CD14-positive monocyte (primary cell): ENCODE measurements at regions of chr22 and their contacts with region 1.

Region 1: DNA sequence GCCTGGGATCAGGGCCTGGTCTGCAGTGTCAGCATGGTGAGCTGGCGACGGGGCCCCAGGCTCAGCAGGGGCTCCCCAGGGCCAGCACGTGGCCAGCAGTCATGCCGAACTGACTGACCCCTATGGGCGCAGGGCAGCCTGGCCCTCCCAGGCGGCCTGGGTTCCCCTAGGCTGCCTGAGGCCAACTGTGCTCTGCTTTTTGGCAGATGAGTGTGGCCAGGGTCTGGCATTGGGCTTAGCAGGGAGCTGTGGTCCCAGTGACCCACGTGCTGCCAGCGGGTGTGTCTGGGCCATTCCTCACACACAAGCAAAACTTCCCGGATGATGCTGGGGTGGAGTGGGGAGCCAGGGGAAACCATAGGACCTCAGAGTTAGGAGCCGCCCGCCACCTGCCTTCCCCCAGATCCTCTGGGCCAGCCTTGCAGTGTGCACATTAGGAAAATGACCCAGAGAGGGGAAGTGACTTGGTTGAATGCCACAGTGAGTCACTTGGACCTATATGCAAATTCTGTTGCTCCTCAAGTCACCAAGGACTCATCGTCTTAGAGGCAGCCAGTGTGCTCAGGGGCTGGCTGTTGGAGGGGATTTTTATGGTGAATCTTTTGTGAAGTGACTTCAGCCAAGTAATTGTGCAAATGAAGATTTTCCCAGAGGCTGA is 6.5 kb downstream of the ADORA2A start:
- DNase-seq: peak; percentile 94 to 100 (median 98)
- H3K4me3 ChIP-seq: peak overlapping the region in 1 of 3 experiments; percentile 23
- H3K4me3 Mint-ChIP-seq: peak overlapping the region; percentile 63 to 81
- H3K27ac ChIP-seq: peak overlapping the region; percentile 98 to 99
- H3K27ac Mint-ChIP-seq: peak overlapping the region; percentile 98 to 100 (median 100)
- H3K4me1 ChIP-seq: peaks cover 72 to 100% of the 10 kb centered on the region in 2 donors
- H3K4me1 Mint-ChIP-seq: peaks cover 88% of the 10 kb centered on the region
- H3K27me3 ChIP-seq: no peaks in the 10 kb centered on the region
- H3K27me3 Mint-ChIP-seq: peaks cover 0 to 2% (median 0%) of the 10 kb centered on the region in 3 donors
- CTCF ChIP-seq: no peak

Region 2: GRCh38 chr22:23888615-23889401 is 545.1 kb before region 1 on chr22:
- intact Hi-C with region 1: no loop called
- DNase-seq: no peak
- H3K4me3 ChIP-seq: no peak overlapping the region
- H3K4me3 Mint-ChIP-seq: no peak overlapping the region
- H3K27ac ChIP-seq: no peak overlapping the region
- H3K27ac Mint-ChIP-seq: no peak overlapping the region
- H3K4me1 ChIP-seq: peaks cover 6 to 7% of the 10 kb centered on the region in 2 donors
- H3K4me1 Mint-ChIP-seq: peaks cover 7% of the 10 kb centered on the region
- H3K27me3 ChIP-seq: no peaks in the 10 kb centered on the region
- H3K27me3 Mint-ChIP-seq: peaks cover 3 to 8% (median 4%) of the 10 kb centered on the region in 3 donors
- CTCF ChIP-seq: no peak

Region 3: GRCh38 chr22:24402460-24403192 is 31.3 kb before region 1 on chr22:
- intact Hi-C with region 1: loop called in 1 of 2 experiments (anchors 2 kb)
- DNase-seq: peak; percentile 94 to 98 (median 97)
- H3K4me3 ChIP-seq: peak overlapping the region in 1 of 3 experiments; percentile 35
- H3K4me3 Mint-ChIP-seq: peak overlapping the region; percentile 57 to 67
- H3K27ac ChIP-seq: peak overlapping the region; percentile 38 to 82
- H3K27ac Mint-ChIP-seq: peak overlapping the region; percentile 89 to 98 (median 92)
- H3K4me1 ChIP-seq: peaks cover 34% of the 10 kb centered on the region in 2 donors
- H3K4me1 Mint-ChIP-seq: peaks cover 49% of the 10 kb centered on the region
- H3K27me3 ChIP-seq: no peaks in the 10 kb centered on the region
- H3K27me3 Mint-ChIP-seq: peaks cover 2% of the 10 kb centered on the region in 3 donors
- CTCF ChIP-seq: no peak

Region 4: DNA sequence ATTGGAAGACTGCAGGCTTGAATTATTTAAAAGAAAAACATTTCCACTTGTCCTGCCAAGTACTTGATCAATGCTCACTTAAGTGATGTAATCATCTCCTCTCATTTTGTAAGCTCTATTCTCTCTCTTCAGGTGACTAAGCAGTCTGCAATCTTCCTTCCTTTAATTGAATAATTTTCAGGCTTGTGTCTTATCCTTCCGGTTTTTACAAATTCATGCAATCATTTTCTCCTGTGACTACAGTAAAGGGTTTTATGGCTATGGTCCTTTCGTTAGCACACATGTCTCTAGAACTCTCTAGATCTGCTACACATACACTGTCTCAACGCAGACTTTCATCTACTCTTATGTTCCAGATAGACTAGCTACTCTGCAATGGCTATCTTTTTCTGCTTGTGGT is 48.6 kb after region 1 on chr22:
- intact Hi-C with region 1: loop called in 1 of 2 experiments (anchors 5 kb)
- DNase-seq: peak; percentile 77 to 92 (median 91)
- H3K4me3 ChIP-seq: peak overlapping the region in 1 of 3 experiments; percentile 43
- H3K4me3 Mint-ChIP-seq: peak overlapping the region in 1 of 2 donors; percentile 61
- H3K27ac ChIP-seq: peak overlapping the region in 1 of 2 donors; percentile 80
- H3K27ac Mint-ChIP-seq: peak overlapping the region; percentile 75 to 93 (median 88)
- H3K4me1 ChIP-seq: peaks cover 58 to 64% of the 10 kb centered on the region in 2 donors
- H3K4me1 Mint-ChIP-seq: peaks cover 58% of the 10 kb centered on the region
- H3K27me3 ChIP-seq: no peaks in the 10 kb centered on the region
- H3K27me3 Mint-ChIP-seq: peaks cover 0 to 3% (median 0%) of the 10 kb centered on the region in 3 donors
- CTCF ChIP-seq: no peak

Region 5: GRCh38 chr22:24512043-24512442 is 78.1 kb after region 1 on chr22:
- intact Hi-C with region 1: loop called in 1 of 2 experiments (anchors 2 kb)
- DNase-seq: peak; percentile 80 to 91 (median 81)
- H3K4me3 ChIP-seq: peak overlapping the region in 1 of 3 experiments; percentile 40
- H3K4me3 Mint-ChIP-seq: peak overlapping the region; percentile 52 to 86
- H3K27ac ChIP-seq: peak overlapping the region; percentile 59 to 75
- H3K27ac Mint-ChIP-seq: peak overlapping the region; percentile 89 to 98 (median 94)
- H3K4me1 ChIP-seq: peaks cover 91 to 99% of the 10 kb centered on the region in 2 donors
- H3K4me1 Mint-ChIP-seq: peaks cover 95% of the 10 kb centered on the region
- H3K27me3 ChIP-seq: no peaks in the 10 kb centered on the region
- H3K27me3 Mint-ChIP-seq: peaks cover 0 to 6% (median 3%) of the 10 kb centered on the region in 3 donors
- CTCF ChIP-seq: no peak

Region 6: DNA sequence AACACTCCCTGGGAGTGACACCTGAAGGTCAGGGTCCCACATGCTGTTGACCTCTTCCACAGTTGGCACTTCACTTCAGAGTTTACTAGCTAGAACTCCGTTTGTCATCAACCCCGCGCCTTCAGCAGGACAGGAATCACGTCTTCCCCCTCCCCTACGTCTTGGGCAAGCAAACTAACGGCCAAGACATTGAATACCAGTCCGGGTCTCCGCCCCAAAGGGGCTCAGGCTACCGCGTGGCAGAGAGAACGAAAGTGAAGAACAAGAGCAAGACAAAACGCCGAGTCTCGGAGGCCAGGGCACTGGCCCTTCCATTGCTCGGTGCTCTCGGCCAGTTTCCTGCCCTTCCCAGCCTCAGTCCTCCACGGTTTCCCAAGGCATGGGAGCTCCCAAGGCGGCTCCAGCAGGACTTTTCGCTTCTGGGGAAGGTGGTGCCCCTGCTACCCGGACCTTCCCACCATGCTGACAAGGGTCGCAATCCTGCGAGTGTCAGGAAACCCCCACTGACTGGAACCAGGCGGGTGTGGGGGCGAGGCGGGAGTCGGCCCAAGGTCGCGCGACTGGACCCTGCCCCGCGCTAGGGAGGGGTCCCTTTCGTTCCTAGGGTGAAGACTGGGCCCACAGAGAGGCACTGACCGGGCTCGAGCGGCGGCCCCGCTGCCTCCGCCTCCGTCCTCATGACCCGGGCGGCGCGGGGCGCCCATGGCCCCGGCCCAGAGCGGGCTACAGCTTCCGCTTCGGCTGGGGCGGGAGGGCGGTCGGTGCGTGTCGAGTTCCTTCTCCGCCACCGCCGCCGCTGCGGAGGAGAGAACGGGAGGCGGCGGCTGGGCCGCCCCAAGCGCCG is 120.6 kb after region 1 on chr22 and contains the start of gene GUCD1:
- intact Hi-C with region 1: no loop called
- DNase-seq: peak; percentile 22 to 51 (median 32)
- H3K4me3 ChIP-seq: peak within 1 kb of the TSS; percentile 79 to 98 (median 97)
- H3K4me3 Mint-ChIP-seq: peak within 1 kb of the TSS; percentile 99 to 100
- H3K27ac ChIP-seq: peak within 1 kb of the TSS; percentile 97 to 98
- H3K27ac Mint-ChIP-seq: peak within 1 kb of the TSS; percentile 96 to 99 (median 99)
- H3K4me1 ChIP-seq: peaks cover 46 to 57% of the 10 kb centered on the region in 2 donors
- H3K4me1 Mint-ChIP-seq: peaks cover 58% of the 10 kb centered on the region
- H3K27me3 ChIP-seq: no peaks in the 10 kb centered on the region
- H3K27me3 Mint-ChIP-seq: peaks cover 0 to 3% (median 2%) of the 10 kb centered on the region in 3 donors
- CTCF ChIP-seq: no peak
- polyA plus RNA-seq, gene GUCD1: 67.1 to 85.9 (median 72.5) TPM